HEK293T (cell line): ENCODE measurements at regions of chr1 and their contacts with region 1.

Region 1: DNA sequence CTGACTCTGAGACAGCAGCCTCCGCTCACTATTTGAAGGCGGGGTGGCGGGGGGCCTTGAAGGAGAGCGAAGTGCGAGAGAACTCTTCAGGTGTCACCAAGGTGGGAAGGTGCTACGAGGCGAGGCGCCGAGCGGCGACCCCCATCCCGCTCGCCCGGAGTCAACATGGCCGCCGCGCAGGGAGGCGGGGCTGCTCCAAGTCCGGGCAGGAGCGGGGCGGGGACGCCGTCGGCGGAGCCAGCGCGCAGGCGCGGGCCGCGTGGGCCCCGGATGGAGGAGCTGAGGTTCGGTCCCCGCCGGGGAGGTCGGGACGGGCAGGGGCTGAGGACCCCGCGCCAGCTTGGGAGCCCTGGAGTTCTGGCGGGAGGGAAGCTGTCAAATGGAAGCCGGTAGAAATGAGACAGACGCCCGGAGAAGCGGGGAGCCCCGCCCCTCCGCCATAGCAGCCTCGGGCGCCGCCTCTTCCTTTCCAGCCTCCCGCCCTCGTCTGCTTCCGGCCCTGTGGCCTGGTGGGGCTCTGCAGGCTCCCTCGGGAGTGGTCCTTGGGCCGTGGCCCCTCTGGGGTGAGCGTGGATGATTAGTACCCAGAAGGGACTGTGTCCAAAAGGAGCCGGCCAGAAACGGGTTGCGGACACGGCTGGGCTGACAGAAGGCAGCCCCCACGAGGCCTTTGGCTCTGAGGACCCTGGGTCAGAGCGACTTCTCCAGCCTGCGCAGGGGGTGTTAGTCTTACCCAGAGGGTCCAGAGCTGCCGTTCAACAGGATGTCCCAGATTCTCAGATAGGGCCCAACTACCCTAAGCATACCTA is at the start of gene PIGV:
- DNase-seq: peak; percentile 94

Region 2: DNA sequence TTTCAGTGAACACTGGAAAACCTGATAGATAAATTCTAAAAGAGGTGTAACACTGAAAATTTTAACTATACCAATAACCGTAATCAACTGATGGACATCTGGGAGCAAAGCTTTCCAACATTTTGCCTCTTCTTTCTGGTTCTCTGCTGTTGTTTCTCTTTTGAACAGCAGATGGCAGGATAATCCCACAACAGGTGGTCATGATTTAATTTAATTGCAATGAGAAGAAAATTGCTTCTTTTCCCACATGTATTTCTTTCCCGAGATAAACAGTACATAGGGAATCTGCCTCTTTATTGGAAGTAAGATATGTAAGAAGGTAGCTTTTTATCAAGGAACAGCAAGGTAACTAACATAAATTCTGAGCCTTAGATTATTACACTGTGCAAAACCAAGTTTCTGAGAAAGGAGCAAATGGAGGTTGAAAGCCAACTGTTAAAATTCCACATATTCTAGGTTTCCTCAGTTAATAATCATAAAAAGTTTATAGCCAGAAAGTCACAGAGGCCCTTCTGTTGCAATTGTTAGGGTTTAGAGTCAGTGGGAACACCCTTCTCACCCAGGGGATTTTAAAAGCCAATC is 185.4 kb before region 1 on chr1:
- CTCF ChIA-PET with region 1: interaction called, 51 read pairs
- POLR2A ChIA-PET with region 1: interaction called, 24 read pairs
- DNase-seq: peak; percentile 53

Region 3: GRCh38 chr1:26677306-26678115 is 110.4 kb before region 1 on chr1:
- CTCF ChIA-PET with region 1: interaction called, 11 read pairs
- POLR2A ChIA-PET with region 1: interaction called, 8 read pairs
- DNase-seq: peak; percentile 51

Region 4: DNA sequence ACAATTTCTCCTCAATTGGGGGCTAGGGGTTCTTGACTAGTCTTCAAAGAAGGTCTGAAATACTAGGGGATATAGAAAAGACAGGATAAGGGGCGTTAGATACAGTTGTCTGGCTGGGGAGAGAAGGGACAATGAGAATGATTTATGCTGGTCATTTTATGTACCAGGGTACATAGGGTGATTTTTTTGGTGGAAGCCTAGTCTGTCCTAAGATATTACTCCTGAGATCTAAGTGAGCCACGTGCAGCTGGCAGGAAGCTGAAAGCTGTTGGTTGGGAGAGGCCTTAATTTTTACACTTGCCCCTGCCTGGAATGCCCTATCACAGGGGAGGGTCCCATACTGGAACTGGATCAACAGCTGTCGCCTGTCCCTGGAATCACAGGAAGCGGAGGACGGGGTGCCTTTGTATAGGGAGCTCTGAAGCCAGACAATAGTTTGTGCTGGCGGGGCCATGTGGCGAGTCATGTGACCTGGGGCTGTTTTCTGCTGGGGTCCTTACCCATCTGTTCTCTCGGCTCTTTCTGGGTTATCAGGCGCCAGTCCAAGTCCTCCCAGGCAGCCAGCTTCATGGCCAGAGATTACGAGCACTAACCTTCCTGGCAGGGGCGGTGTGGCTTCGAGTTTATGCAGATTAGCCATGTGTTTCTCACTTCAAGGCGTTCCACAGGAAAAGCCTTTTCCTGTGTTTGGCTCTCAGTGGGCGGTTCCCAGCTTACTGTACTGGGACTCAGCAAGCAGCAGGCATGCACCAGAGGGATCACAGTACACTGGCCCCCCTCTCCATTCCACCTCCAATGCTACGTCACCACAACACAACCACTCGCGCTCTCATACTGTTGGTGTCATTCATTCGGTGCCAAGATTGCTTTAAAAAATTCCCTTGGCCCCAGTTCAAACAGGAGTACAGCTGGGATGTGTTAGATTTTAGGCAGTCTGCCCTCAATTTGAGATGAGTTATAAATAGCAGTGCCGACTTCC is 64.6 kb before region 1 on chr1:
- CTCF ChIA-PET with region 1: no interaction called
- POLR2A ChIA-PET with region 1: interaction called, 10 read pairs
- DNase-seq: peak; percentile 45

Region 5: DNA sequence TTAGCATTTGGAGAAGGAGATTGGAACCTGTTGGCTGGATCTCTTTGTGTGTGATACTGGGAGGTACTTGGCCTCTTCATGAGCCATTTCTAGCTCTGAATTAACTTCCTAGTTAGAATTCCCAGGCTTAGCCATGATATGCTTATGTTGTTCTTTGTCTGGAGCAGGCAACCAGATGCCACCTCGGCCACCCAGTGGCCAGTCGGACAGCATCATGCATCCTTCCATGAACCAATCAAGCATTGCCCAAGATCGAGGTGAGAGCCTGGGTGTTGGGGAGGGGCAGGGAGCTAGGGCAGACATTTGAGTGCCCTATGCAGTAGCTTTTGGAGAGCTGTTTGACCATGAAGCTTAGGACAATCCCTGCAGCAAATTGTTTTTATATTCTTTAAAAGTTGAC is 26.7 kb before region 1 on chr1:
- CTCF ChIA-PET with region 1: no interaction called
- POLR2A ChIA-PET with region 1: no interaction called
- DNase-seq: no peak

Region 6: DNA sequence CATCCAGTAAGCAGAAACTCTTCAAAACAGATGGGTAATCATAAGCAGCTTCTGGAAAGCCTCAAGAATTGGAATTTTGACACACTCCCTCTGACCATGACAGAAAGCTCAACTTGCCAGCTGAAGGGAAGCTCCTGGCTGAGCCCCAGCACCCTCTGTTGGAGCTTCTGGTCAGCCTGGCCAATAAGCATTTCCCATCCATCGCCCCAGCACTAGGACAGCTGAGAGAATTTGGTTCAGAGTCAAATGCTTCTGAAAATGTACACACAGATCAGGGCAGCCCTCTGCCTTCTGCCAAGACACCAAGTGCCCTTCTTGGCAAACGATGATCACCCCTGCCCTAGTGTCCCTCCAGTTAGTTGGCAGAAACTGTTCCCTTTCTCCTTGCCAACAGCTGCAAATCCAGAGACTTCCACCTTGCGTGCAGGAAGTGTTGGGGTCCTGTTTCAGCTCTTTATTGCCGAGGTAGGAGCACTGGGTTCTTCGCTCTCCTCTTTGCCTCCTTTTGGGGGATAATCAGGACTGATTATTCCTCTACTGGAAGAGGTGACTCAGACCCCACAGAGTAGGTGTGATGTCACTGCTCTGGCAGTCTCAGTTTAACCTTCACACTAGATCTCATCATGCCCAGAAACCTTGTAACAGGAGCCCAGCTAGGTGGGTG is 11.7 kb after region 1 on chr1:
- CTCF ChIA-PET with region 1: interaction called, 14 read pairs
- POLR2A ChIA-PET with region 1: interaction called, 8 read pairs
- DNase-seq: no peak

Region 7: GRCh38 chr1:26938004-26938658 is 150.2 kb after region 1 on chr1:
- CTCF ChIA-PET with region 1: no interaction called
- POLR2A ChIA-PET with region 1: no interaction called
- DNase-seq: no peak

Region 8: GRCh38 chr1:26949926-26950319 is 162.0 kb after region 1 on chr1:
- CTCF ChIA-PET with region 1: no interaction called
- POLR2A ChIA-PET with region 1: no interaction called
- DNase-seq: no peak